ENCODE measurements at regions of chr5 and their contacts with region 1.

Region 1: GRCh38 chr5:114018186-114018585 is 343.7 kb upstream of the KCNN2 start:
- DNase-seq: peak in 1 of 2 experiments; percentile 3
- H3K4me3 ChIP-seq: no peak overlapping the region
- H3K4me3 Mint-ChIP-seq: no peak overlapping the region
- H3K27ac Mint-ChIP-seq: no peak overlapping the region
- H3K4me1 ChIP-seq: no peaks in the 10 kb centered on the region
- H3K4me1 Mint-ChIP-seq: no peaks in the 10 kb centered on the region
- H3K27me3 ChIP-seq: no peaks in the 10 kb centered on the region
- H3K27me3 Mint-ChIP-seq: peaks cover 5% of the 10 kb centered on the region
- CTCF ChIP-seq: peak in 1 of 2 experiments; percentile 16

Region 2: DNA sequence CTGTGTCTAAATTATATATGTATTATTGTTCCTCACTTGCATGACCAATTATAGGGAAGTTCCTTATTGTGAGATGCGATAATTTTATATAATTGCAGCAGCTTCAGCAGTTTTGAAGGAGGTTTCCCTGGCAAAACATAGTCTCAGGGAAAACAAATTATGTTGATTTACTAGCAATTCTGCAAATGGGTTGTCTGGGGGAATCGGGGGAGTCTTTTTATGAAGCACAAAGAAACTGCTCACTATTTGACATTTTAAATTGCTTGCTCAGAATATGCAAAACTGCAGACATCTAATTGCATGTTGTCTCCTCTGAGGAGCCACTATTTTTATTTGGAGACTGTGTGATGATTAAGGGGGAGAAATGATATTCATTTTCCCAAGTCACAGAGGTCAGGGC is 143.1 kb before region 1 on chr5:
- CTCF ChIA-PET with region 1: no interaction called
- POLR2A ChIA-PET with region 1: no interaction called
- intact Hi-C with region 1: no loop called
- DNase-seq: no peak
- H3K4me3 ChIP-seq: no peak overlapping the region
- H3K4me3 Mint-ChIP-seq: no peak overlapping the region
- H3K27ac Mint-ChIP-seq: no peak overlapping the region
- H3K4me1 ChIP-seq: no peaks in the 10 kb centered on the region
- H3K4me1 Mint-ChIP-seq: no peaks in the 10 kb centered on the region
- H3K27me3 ChIP-seq: no peaks in the 10 kb centered on the region
- H3K27me3 Mint-ChIP-seq: peaks cover 9% of the 10 kb centered on the region
- CTCF ChIP-seq: no peak

Region 3: DNA sequence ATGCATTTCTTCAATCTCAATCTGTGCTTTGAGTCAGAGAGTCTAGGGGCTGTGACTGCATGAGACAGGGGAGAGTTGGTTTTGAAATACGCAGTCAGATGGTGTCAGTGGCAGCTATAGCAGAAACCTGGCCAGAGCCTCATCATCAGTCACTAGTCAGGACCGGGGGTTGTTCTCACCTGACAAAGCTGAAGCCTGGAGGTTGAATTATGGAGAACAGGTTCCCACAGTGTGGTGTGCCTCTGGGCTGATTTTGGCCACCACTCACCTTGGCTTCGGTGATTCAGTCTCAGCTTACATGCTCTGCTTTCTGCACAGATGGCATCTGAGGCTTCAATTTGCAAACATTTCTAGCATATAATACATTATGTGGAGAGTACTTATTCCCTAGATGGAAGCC is 117.4 kb before region 1 on chr5:
- CTCF ChIA-PET with region 1: no interaction called
- POLR2A ChIA-PET with region 1: no interaction called
- intact Hi-C with region 1: no loop called
- DNase-seq: no peak
- H3K4me3 ChIP-seq: no peak overlapping the region
- H3K4me3 Mint-ChIP-seq: no peak overlapping the region
- H3K27ac Mint-ChIP-seq: no peak overlapping the region
- H3K4me1 ChIP-seq: no peaks in the 10 kb centered on the region
- H3K4me1 Mint-ChIP-seq: no peaks in the 10 kb centered on the region
- H3K27me3 ChIP-seq: no peaks in the 10 kb centered on the region
- H3K27me3 Mint-ChIP-seq: peaks cover 8% of the 10 kb centered on the region
- CTCF ChIP-seq: no peak

Region 4: GRCh38 chr5:113950186-113950585 is 68.0 kb before region 1 on chr5:
- CTCF ChIA-PET with region 1: no interaction called
- POLR2A ChIA-PET with region 1: no interaction called
- intact Hi-C with region 1: no loop called
- DNase-seq: no peak
- H3K4me3 ChIP-seq: no peak overlapping the region
- H3K4me3 Mint-ChIP-seq: no peak overlapping the region
- H3K27ac Mint-ChIP-seq: no peak overlapping the region
- H3K4me1 ChIP-seq: no peaks in the 10 kb centered on the region
- H3K4me1 Mint-ChIP-seq: no peaks in the 10 kb centered on the region
- H3K27me3 ChIP-seq: no peaks in the 10 kb centered on the region
- H3K27me3 Mint-ChIP-seq: peaks cover 4% of the 10 kb centered on the region
- CTCF ChIP-seq: no peak

Region 5: GRCh38 chr5:114305402-114306211 is 287.4 kb after region 1 on chr5:
- CTCF ChIA-PET with region 1: no interaction called
- POLR2A ChIA-PET with region 1: no interaction called
- intact Hi-C with region 1: loop called (anchors 1 kb)
- DNase-seq: peak in 1 of 2 experiments; percentile 2
- H3K4me3 ChIP-seq: no peak overlapping the region
- H3K4me3 Mint-ChIP-seq: no peak overlapping the region
- H3K27ac Mint-ChIP-seq: no peak overlapping the region
- H3K4me1 ChIP-seq: no peaks in the 10 kb centered on the region
- H3K4me1 Mint-ChIP-seq: no peaks in the 10 kb centered on the region
- H3K27me3 ChIP-seq: no peaks in the 10 kb centered on the region
- H3K27me3 Mint-ChIP-seq: peaks cover 6% of the 10 kb centered on the region
- CTCF ChIP-seq: peak; percentile 1 to 30

Region 6: GRCh38 chr5:114789773-114790402 is 771.7 kb after region 1 on chr5:
- CTCF ChIA-PET with region 1: no interaction called
- POLR2A ChIA-PET with region 1: no interaction called
- intact Hi-C with region 1: loop called (anchors 5 kb)
- DNase-seq: peak in 1 of 2 experiments; percentile 20
- H3K4me3 ChIP-seq: no peak overlapping the region
- H3K4me3 Mint-ChIP-seq: no peak overlapping the region
- H3K27ac Mint-ChIP-seq: no peak overlapping the region
- H3K4me1 ChIP-seq: peaks cover 4% of the 10 kb centered on the region; the same call in 1 of the 2 replicates
- H3K4me1 Mint-ChIP-seq: peaks cover 7% of the 10 kb centered on the region
- H3K27me3 ChIP-seq: no peaks in the 10 kb centered on the region
- H3K27me3 Mint-ChIP-seq: peaks cover 3% of the 10 kb centered on the region
- CTCF ChIP-seq: peak in 1 of 2 experiments; percentile 57

Measured in Caco-2 (cell line).